ENCODE measurements at regions of chr4 and their contacts with region 1.

Region 1: GRCh38 chr4:64417974-64418373 is 8.7 kb upstream of the TECRL start:
- DNase-seq: no peak
- ATAC-seq: peak; percentile 87

Region 2: GRCh38 chr4:64465263-64465662 is 47.3 kb after region 1 on chr4:
- intact Hi-C with region 1: loop called (anchors 5 kb)
- DNase-seq: no peak
- ATAC-seq: peak; percentile 46

Region 3: GRCh38 chr4:64477127-64477526 is 59.2 kb after region 1 on chr4:
- intact Hi-C with region 1: loop called (anchors 2 kb)
- DNase-seq: no peak
- ATAC-seq: no peak